Activated CD4-positive, alpha-beta T cell treated with anti-CD3 and anti-CD28 coated beads, Interleukin-2, amount 10 ng/mL, durations not matched to agents 7 days and 5 days (primary cell): ENCODE measurements at regions of chr13 and their contacts with region 1.

Region 1: GRCh38 chr13:51797664-51798488 is 6.1 kb downstream of the DHRS12 start:
- DNase-seq: peak; percentile 79
- H3K4me3 Mint-ChIP-seq: no peak overlapping the region
- H3K27ac Mint-ChIP-seq: no peak overlapping the region
- H3K4me1 Mint-ChIP-seq: peaks cover 34% of the 10 kb centered on the region
- H3K27me3 Mint-ChIP-seq: no peaks in the 10 kb centered on the region

Region 2: GRCh38 chr13:51502153-51502651 is 295.7 kb before region 1 on chr13:
- CTCF ChIA-PET with region 1: no interaction called
- POLR2A ChIA-PET with region 1: no interaction called
- DNase-seq: no peak
- H3K4me3 Mint-ChIP-seq: no peak overlapping the region
- H3K27ac Mint-ChIP-seq: no peak overlapping the region
- H3K4me1 Mint-ChIP-seq: peaks cover 14% of the 10 kb centered on the region
- H3K27me3 Mint-ChIP-seq: peaks cover 2% of the 10 kb centered on the region

Region 3: GRCh38 chr13:51781246-51782022 is 16.4 kb before region 1 on chr13:
- CTCF ChIA-PET with region 1: interaction called, 15 read pairs
- POLR2A ChIA-PET with region 1: no interaction called
- DNase-seq: peak; percentile 29
- H3K4me3 Mint-ChIP-seq: no peak overlapping the region
- H3K27ac Mint-ChIP-seq: no peak overlapping the region
- H3K4me1 Mint-ChIP-seq: peaks cover 2% of the 10 kb centered on the region
- H3K27me3 Mint-ChIP-seq: no peaks in the 10 kb centered on the region

Region 4: DNA sequence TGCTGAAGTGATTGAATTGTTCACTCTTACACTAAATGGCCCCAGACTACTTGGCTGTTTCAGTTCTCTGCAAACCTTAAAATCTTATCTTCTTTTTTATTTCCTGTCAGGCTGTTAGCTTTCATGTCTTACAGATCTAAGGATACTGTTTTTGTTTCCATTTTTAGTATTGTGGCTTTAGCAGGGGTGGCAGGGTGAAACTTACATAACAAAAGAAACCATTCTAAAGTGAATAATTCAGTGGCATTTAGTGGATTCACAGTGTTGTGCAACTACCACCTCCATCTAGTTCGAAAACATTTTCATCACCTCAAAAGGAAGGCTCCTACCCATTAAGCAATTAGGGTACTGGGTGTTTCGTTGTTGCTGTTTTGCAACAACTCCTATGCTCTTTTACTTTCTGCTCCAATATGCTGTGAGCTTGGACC is 27.3 kb after region 1 on chr13:
- CTCF ChIA-PET with region 1: no interaction called
- POLR2A ChIA-PET with region 1: no interaction called
- DNase-seq: peak; percentile 54
- H3K4me3 Mint-ChIP-seq: peak overlapping the region; percentile 65
- H3K27ac Mint-ChIP-seq: peak overlapping the region; percentile 97
- H3K4me1 Mint-ChIP-seq: peaks cover 97% of the 10 kb centered on the region
- H3K27me3 Mint-ChIP-seq: no peaks in the 10 kb centered on the region

Region 5: GRCh38 chr13:51874651-51875050 is 76.8 kb after region 1 on chr13:
- CTCF ChIA-PET with region 1: no interaction called
- POLR2A ChIA-PET with region 1: no interaction called
- DNase-seq: no peak
- H3K4me3 Mint-ChIP-seq: no peak overlapping the region
- H3K27ac Mint-ChIP-seq: no peak overlapping the region
- H3K4me1 Mint-ChIP-seq: peaks cover 3% of the 10 kb centered on the region
- H3K27me3 Mint-ChIP-seq: peaks cover 3% of the 10 kb centered on the region